Heart left ventricle (tissue), 16 donors: ENCODE measurements at regions of chr5 and their contacts with region 1.

Region 1: GRCh38 chr5:60883229-60883628 is 39.2 kb upstream of the ELOVL7 start:
- DNase-seq: no peak
- ATAC-seq: no peak
- H3K4me3 ChIP-seq: no peak overlapping the region
- H3K27ac ChIP-seq: no peak overlapping the region
- H3K4me1 ChIP-seq: no peaks in the 10 kb centered on the region
- H3K27me3 ChIP-seq: no peaks in the 10 kb centered on the region
- CTCF ChIP-seq: peak in 6 of 12 donors; percentile 7 to 37 (median 24)
- POLR2A ChIP-seq: no peak

Region 2: DNA sequence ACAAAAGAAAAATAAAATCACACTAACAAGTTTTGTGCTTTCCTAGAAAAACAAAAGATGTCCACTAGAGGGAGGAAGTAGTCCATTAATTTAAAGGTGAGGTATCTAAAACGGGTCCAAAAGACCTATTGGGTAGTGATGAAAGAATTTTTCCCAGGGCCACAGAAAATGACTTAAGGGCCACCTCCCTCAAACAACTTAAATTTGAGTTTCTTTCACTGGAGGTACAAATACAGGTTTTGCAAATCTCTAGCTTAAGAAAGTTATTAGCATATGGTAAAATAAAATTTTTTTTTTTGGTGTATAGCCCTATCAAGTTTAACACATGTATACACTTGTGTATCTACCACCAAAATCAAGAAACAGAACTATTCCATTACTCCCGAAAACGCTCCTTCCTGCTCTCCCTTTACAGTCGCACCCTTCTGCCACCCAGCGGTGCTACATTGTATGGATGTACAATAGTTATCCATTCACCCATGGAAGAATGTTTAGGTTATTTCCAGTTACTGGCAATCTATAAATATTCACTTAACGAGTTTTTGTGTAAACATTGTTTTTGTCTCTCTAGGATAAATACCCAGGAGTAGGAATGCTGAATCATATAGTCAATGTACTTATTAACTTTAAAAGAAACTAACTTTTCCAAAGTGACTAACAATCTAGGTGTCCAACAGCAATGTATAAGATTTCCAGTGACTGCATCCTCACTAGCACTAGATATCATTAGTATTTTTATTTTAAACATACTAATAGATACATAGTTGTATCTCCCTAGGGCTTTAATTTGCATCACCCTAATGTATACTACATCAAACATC is 205.2 kb before region 1 on chr5:
- intact Hi-C with region 1: loop called in 1 of 10 experiments (anchors 10 kb)
- DNase-seq: no peak
- ATAC-seq: no peak
- H3K4me3 ChIP-seq: no peak overlapping the region
- H3K27ac ChIP-seq: no peak overlapping the region
- H3K4me1 ChIP-seq: peaks cover 0 to 5% (median 0%) of the 10 kb centered on the region in 12 donors
- H3K27me3 ChIP-seq: no peaks in the 10 kb centered on the region
- CTCF ChIP-seq: peak in 11 of 12 donors; percentile 20 to 55 (median 46)
- POLR2A ChIP-seq: no peak